Mammary epithelial cell (primary cell): ENCODE measurements at regions of chrX and their contacts with region 1.

Region 1: DNA sequence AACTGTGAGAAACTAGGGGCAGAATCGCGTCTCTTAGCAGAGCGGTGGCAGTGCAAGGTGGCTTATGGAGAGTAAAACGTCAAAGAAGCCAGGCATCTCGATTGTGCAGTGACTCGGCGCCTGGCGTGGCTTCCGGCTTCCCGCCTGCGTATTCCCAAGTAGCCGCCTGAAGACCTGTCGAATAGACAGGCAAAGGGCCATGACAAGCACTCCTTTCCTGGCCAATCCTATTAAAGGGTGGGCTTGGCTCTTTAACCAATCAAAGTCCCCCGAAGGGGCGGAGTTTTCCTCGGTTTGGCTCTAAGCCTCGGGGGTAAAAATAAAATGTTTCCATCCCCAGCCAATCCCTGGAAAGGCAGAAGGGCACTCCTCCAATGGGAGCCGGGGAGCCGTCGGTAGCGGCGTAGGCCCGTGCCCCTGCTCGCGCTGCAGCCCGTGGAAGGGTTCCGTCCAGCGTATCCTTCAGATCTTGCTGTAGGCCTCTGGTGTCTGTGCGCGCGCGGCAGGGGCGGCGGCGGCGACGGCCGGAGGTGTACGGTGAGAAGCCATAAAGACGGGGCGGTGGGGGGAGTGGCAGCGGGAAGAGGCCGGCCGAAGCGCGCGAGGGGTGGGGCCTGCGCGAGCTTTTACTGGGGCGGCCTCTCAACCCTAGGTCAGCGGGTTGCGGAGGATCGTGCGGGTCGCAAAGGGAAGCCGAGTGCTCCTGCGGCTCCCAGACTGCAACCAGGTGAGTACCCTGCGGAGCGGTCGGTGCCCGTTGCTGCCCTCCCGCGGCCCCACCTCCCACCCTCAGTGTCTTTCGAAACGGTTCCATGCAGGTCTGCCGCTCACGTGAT is at the start of gene KANTR:
- DNase-seq: peak; percentile 92
- H3K4me3 ChIP-seq: peak within 1 kb of the TSS; percentile 56 to 72 (median 60)
- H3K27ac ChIP-seq: peak within 1 kb of the TSS; percentile 71
- H3K4me1 ChIP-seq: peaks cover 3% of the 10 kb centered on the region
- H3K27me3 ChIP-seq: no peaks in the 10 kb centered on the region
- CTCF ChIP-seq: peak in 1 of 2 donors; percentile 12
- total RNA-seq, gene KANTR: 5.1 to 8.0 TPM

Region 2: DNA sequence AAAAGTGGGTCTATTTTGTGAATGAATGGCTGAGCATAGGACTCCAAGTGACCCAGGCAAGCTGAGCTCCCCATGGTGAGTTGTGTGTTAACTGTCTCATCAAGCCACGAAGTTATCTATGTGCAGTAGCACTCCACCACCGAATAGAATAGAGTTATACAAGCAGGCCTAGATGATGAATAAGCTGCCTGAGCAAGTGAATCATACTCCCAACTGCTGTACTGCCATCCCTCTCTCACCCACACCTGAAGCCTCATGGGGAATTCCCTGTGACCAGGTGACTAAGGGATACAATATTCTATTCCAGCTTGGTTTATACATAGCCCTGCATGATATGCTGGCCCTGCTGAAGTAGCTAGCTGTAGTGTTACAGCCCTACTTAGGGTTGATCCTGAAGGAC is 92.4 kb after region 1 on chrX:
- CTCF ChIA-PET with region 1: no interaction called
- dilution Hi-C with region 1: no loop called
- in situ Hi-C with region 1: no loop called
- intact Hi-C with region 1: loop called (anchors 2 kb)
- DNase-seq: peak; percentile 96
- H3K4me3 ChIP-seq: no peak overlapping the region
- H3K27ac ChIP-seq: peak overlapping the region; percentile 9
- H3K4me1 ChIP-seq: peaks cover 24% of the 10 kb centered on the region
- H3K27me3 ChIP-seq: no peaks in the 10 kb centered on the region
- CTCF ChIP-seq: no peak